ENCODE measurements at regions of chr9 and their contacts with region 1.

Region 1: DNA sequence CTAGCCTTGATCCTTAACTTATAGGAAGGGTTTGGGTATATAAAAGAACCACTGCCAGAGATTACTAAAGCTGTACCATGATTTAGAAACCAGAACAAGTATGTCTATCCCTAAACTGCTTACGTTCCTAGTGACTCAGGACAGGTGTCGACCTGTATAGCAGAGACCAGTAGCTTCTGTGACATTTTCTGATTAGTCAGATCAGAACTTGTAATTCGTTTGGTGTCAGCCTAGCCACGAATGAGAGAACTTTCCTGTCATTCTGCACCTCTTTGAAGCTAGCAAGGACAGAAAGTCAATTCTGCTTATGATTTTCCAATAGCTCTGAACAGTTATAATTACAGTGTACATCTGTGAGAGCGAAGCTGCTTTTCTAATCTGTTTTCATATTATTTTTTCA is 39.5 kb downstream of the PRKACG start:
- DNase-seq: peak; percentile 66
- H3K4me3 Mint-ChIP-seq: no peak overlapping the region
- H3K27ac Mint-ChIP-seq: peak overlapping the region; percentile 76
- H3K4me1 Mint-ChIP-seq: peaks cover 38% of the 10 kb centered on the region
- H3K27me3 Mint-ChIP-seq: peaks cover 7% of the 10 kb centered on the region

Region 2: DNA sequence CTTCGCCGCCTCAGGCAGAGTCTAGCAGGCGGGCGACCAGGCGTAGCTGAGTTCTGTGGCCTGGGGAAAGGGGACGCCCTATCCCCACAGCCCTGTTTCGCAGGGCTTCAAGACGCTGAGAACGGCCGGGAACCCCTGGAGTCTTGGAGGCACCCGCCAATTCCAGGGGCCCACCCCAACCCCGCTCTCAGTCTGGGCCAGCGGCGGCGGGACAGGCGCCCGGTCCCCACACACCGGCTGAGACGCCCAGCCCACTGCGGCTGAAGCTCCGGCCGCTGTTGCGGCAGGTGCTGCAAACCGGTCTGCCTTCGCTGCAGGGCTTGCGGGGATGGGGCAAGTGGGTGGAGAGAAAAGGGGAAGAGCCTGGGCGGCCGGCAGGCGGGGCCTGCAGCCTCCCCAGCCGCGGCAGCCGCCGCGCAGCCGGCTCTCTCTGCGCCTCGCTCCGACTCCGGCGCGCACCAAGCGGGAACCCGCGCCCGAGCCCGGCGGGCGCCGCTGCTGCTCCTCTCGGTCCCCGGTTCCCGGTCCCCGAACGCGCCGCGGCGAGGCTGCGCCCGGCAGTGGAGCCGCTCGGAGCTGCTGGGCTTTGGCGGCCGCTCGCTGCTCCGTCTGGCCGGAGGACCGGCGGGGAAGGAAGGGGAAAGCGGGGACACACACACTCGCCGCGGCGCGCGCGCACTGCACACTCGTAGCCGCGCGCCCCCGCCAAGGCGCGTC is 269.5 kb before region 1 on chr9 and contains the start of gene PIP5K1B:
- CTCF ChIA-PET with region 1: no interaction called
- intact Hi-C with region 1: no loop called
- DNase-seq: peak; percentile 62
- H3K4me3 Mint-ChIP-seq: peak within 1 kb of the TSS; percentile 82
- H3K27ac Mint-ChIP-seq: no peak within 1 kb of the TSS
- H3K4me1 Mint-ChIP-seq: peaks cover 17% of the 10 kb centered on the region
- H3K27me3 Mint-ChIP-seq: peaks cover 68% of the 10 kb centered on the region
- total RNA-seq, gene PIP5K1B: 0.38 to 0.42 TPM

Region 3: GRCh38 chr9:68895741-68896478 is 78.5 kb before region 1 on chr9:
- CTCF ChIA-PET with region 1: no interaction called
- intact Hi-C with region 1: loop called (anchors 1 kb)
- DNase-seq: no peak
- H3K4me3 Mint-ChIP-seq: peak overlapping the region; percentile 61
- H3K27ac Mint-ChIP-seq: peak overlapping the region; percentile 89
- H3K4me1 Mint-ChIP-seq: peaks cover 42% of the 10 kb centered on the region
- H3K27me3 Mint-ChIP-seq: no peaks in the 10 kb centered on the region

Region 4: GRCh38 chr9:68955330-68955729 is 19.1 kb before region 1 on chr9:
- CTCF ChIA-PET with region 1: interaction called, 32 read pairs
- intact Hi-C with region 1: loop called (anchors 1 kb)
- DNase-seq: peak; percentile 25
- H3K4me3 Mint-ChIP-seq: no peak overlapping the region
- H3K27ac Mint-ChIP-seq: no peak overlapping the region
- H3K4me1 Mint-ChIP-seq: peaks cover 21% of the 10 kb centered on the region
- H3K27me3 Mint-ChIP-seq: peaks cover 2% of the 10 kb centered on the region

Region 5: DNA sequence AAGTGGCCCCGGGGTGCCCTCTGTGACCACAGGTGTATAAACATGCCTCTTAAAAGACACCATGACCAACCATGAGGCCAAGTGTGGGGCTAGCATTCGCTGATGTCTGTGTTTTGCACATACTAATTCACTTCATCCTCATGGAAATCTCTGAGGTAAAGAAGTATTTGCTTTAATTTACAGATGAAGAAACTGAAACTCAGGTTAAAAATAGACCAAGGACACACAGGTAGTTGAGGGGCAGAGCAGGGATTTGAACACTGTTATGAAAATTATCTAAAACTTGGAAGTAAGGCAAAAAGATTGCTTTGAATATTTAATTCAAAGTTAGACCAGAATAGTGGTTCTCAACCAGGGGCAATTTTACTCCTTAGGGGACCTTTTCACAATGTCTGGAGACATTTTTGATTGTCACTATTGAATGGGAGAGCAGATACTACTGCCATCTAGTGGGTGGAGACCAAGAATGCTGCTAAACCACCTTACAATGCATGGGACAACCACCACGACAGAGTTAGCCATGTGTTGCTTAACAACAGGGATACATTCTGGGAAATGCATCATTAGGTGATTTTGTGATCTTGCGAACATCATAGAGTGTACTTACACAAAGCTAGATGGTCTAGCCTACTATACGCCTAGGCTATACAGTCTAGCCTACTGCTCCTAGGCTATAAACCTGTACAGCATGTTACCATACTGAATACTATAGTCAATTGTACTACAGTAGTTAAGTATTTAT is 53.1 kb after region 1 on chr9:
- CTCF ChIA-PET with region 1: no interaction called
- intact Hi-C with region 1: loop called (anchors 2 kb)
- DNase-seq: peak; percentile 65
- H3K4me3 Mint-ChIP-seq: no peak overlapping the region
- H3K27ac Mint-ChIP-seq: no peak overlapping the region
- H3K4me1 Mint-ChIP-seq: peaks cover 36% of the 10 kb centered on the region
- H3K27me3 Mint-ChIP-seq: no peaks in the 10 kb centered on the region

Region 6: DNA sequence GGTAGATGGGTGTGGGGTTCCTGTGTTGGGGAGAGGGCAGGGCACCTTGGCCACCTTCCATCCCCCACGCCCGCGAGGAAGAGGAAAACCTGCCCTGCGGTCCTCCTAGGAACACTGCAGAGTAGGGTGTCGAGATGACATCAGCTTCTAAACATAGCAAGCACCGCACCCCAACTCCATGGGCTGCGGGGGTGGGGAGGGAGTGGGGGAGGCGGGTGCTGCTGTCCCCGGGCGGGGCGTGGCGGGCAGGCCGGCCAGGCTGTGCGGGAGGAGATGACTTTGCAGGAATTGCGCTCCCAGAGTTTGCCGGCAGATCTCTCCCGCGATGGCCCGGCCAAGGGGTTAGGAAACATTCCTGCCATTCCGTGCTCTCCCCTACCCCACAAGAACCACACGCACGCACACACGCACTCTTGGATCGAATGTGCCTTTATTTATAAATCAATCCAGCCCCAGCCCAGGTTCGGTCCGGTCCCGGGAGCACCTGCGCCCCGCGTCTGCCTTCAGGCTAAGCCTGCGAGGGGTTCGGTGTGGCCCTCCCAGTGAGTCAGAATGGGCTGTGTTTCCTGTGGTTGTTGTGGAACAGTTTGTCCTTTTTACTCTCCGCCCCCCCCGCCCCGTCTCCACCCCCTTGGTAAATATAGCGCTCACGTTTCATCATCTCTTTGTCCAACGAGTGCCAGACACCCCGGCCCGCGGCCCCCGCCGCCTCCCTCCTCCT is 1445.3 kb after region 1 on chr9:
- CTCF ChIA-PET with region 1: no interaction called
- intact Hi-C with region 1: loop called (anchors 1 kb)
- DNase-seq: peak; percentile 94
- H3K4me3 Mint-ChIP-seq: peak overlapping the region; percentile 96
- H3K27ac Mint-ChIP-seq: peak overlapping the region; percentile 100
- H3K4me1 Mint-ChIP-seq: peaks cover 47% of the 10 kb centered on the region
- H3K27me3 Mint-ChIP-seq: no peaks in the 10 kb centered on the region

Measured in activated naive CD4-positive, alpha-beta T cell treated with anti-CD3 and anti-CD28 coated beads for 36 hours (primary cell).